ENCODE measurements at regions of chr3 and their contacts with region 1.

Region 1: GRCh38 chr3:169966428-169966950 is at the start of gene SEC62:
- DNase-seq: peak; percentile 99
- H3K4me3 ChIP-seq: peak within 1 kb of the TSS; percentile 82 to 92 (median 88)
- H3K27ac ChIP-seq: peak within 1 kb of the TSS; percentile 93 to 98 (median 96)
- H3K4me1 ChIP-seq: peaks cover 24 to 52% (median 46%) of the 10 kb centered on the region in 4 donors
- H3K27me3 ChIP-seq: no peaks in the 10 kb centered on the region
- CTCF ChIP-seq: peak; percentile 21 to 54 (median 45)
- EP300 ChIP-seq: no peak
- POLR2A ChIP-seq: peak; percentile 52
- total RNA-seq, gene SEC62: 65.6 to 71.8 (median 69.3) TPM

Region 2: DNA sequence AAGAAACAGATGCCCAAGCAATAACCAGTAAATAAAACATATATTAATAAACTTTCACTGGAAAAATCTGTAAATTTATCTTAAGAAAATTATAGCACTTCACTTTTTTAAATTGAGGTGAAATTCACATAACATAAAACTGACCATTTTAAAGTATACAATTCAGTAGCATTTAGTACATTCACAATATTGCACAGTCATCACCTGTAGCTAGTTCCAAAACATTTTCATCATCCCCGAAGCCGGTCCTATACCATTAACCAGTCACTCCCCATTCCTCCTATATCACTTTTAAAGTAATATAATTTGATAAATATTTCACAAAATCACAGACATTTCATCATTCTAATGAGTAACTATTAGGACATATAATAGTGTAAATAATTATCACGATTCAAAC is 161.8 kb before region 1 on chr3:
- intact Hi-C with region 1: no loop called
- DNase-seq: no peak
- H3K4me3 ChIP-seq: no peak overlapping the region
- H3K27ac ChIP-seq: no peak overlapping the region
- H3K4me1 ChIP-seq: peaks cover 0 to 7% (median 0%) of the 10 kb centered on the region in 4 donors
- H3K27me3 ChIP-seq: no peaks in the 10 kb centered on the region
- CTCF ChIP-seq: no peak
- EP300 ChIP-seq: no peak
- POLR2A ChIP-seq: no peak

Region 3: GRCh38 chr3:169863458-169863899 is 103.0 kb before region 1 on chr3:
- intact Hi-C with region 1: loop called (anchors 2 kb)
- DNase-seq: no peak
- H3K4me3 ChIP-seq: no peak overlapping the region
- H3K27ac ChIP-seq: no peak overlapping the region
- H3K4me1 ChIP-seq: peaks cover 0 to 5% (median 4%) of the 10 kb centered on the region in 4 donors
- H3K27me3 ChIP-seq: no peaks in the 10 kb centered on the region
- CTCF ChIP-seq: peak; percentile 83 to 94 (median 87)
- EP300 ChIP-seq: no peak
- POLR2A ChIP-seq: no peak

Region 4: GRCh38 chr3:170089862-170090600 is 123.5 kb after region 1 on chr3:
- intact Hi-C with region 1: loop called (anchors 10 kb)
- DNase-seq: no peak
- H3K4me3 ChIP-seq: no peak overlapping the region
- H3K27ac ChIP-seq: no peak overlapping the region
- H3K4me1 ChIP-seq: peaks cover 0 to 6% (median 0%) of the 10 kb centered on the region in 4 donors
- H3K27me3 ChIP-seq: no peaks in the 10 kb centered on the region
- CTCF ChIP-seq: no peak
- EP300 ChIP-seq: no peak
- POLR2A ChIP-seq: no peak

Measured in esophagus muscularis mucosa (tissue), 4 donors.